ENCODE measurements at regions of chr7 and their contacts with region 1.

Region 1: DNA sequence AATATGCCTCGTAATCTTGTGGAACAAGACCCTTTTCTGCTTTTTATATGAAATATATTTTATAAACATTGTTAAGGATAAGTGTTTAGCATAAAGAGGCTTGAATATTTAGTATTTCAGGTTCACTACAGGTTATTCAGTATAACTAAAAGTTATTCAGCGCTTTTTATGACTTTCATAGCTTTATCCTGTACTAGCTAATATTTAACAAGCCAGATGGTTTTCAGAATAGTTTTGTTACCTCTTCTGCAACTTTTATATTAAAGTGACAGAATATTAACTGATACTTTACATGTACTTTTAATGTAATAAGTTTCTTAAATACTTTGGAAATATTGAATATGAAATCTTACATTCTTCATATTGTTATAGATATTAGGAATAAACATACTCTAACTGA is 75.4 kb downstream of the CYP51A1 start:
- DNase-seq: no peak
- H3K4me3 ChIP-seq: no peak overlapping the region
- H3K27ac ChIP-seq: no peak overlapping the region
- H3K4me1 ChIP-seq: peaks cover 9% of the 10 kb centered on the region
- H3K27me3 ChIP-seq: no peaks in the 10 kb centered on the region
- CTCF ChIP-seq: no peak

Region 2: GRCh38 chr7:91029688-91030087 is 1029.2 kb before region 1 on chr7:
- CTCF ChIA-PET with region 1: interaction called, 18 read pairs
- dilution Hi-C with region 1: no loop called
- in situ Hi-C with region 1: no loop called
- intact Hi-C with region 1: no loop called
- DNase-seq: no peak
- H3K4me3 ChIP-seq: no peak overlapping the region
- H3K27ac ChIP-seq: no peak overlapping the region
- H3K4me1 ChIP-seq: no peaks in the 10 kb centered on the region
- H3K27me3 ChIP-seq: no peaks in the 10 kb centered on the region
- CTCF ChIP-seq: no peak

Region 3: DNA sequence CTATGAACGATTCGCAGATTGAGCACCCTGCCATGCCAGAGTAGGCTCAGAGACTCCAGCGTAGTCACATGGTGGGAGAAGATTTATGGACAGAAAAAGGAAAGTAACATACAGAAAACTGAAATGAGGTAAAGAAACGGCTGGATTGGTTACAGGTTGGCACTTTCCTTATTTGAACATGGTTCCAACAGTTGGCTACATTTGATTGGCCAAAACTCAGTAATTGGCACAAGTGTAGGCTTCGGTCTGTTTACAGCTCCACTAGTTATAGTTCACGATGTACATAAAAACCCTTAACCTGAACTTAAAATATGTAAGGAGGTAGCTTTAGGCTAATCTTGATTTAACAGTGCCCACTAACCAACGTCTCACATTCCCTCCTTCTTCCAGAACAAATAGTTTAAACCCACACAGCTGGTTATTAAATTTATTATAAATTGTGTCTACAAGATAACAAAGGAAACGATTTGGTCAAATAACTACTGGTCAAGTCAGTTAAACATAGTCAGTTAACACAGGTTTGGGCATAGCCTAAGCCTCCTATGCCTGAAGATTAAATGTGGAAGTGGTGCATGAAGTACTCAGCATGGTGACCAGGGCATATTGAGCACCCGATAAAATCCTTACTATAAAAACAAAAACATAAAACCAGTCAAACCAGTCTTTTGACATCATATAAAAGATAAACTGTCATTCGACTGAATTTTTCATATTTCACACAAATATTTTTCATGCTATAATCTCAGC is 160.5 kb before region 1 on chr7:
- CTCF ChIA-PET with region 1: no interaction called
- dilution Hi-C with region 1: no loop called
- in situ Hi-C with region 1: no loop called
- intact Hi-C with region 1: no loop called
- DNase-seq: no peak
- H3K4me3 ChIP-seq: no peak overlapping the region
- H3K27ac ChIP-seq: no peak overlapping the region
- H3K4me1 ChIP-seq: no peaks in the 10 kb centered on the region
- H3K27me3 ChIP-seq: no peaks in the 10 kb centered on the region
- CTCF ChIP-seq: no peak

Region 4: GRCh38 chr7:92075434-92076158 is 16.7 kb after region 1 on chr7:
- CTCF ChIA-PET with region 1: no interaction called
- dilution Hi-C with region 1: no loop called
- in situ Hi-C with region 1: no loop called
- intact Hi-C with region 1: no loop called
- DNase-seq: peak; percentile 16
- H3K4me3 ChIP-seq: no peak overlapping the region
- H3K27ac ChIP-seq: peak overlapping the region; percentile 66
- H3K4me1 ChIP-seq: peaks cover 10% of the 10 kb centered on the region
- H3K27me3 ChIP-seq: no peaks in the 10 kb centered on the region
- CTCF ChIP-seq: no peak